ENCODE measurements at regions of chr10 and their contacts with region 1.

Region 1: GRCh38 chr10:126247446-126247975 is 140.8 kb downstream of the ADAM12 start:
- DNase-seq: peak; percentile 76
- H3K4me3 ChIP-seq: no peak overlapping the region
- H3K27ac ChIP-seq: no peak overlapping the region
- H3K4me1 ChIP-seq: peaks cover 10% of the 10 kb centered on the region
- H3K27me3 ChIP-seq: no peaks in the 10 kb centered on the region
- CTCF ChIP-seq: no peak

Region 2: DNA sequence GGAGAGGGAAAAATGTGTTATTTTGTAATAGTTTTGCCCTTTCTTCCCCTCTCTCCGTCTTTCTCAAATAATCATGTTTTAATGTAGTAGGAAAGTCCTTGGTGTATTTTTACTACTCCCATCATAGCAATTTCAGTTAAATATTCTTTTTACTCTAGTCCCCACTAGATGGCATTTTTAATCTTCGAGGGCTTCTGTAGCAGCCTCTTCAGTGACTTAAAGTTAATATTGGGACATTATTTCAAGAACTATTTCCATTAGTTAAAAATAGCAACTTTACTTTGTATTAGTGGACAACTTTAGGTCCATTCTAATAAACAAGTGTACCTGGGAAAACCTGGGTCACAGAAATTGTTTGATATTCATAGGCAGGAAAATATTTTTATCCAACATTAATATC is 505.0 kb before region 1 on chr10:
- CTCF ChIA-PET with region 1: no interaction called
- dilution Hi-C with region 1: no loop called
- in situ Hi-C with region 1: no loop called
- intact Hi-C with region 1: no loop called
- DNase-seq: no peak
- H3K4me3 ChIP-seq: no peak overlapping the region
- H3K27ac ChIP-seq: no peak overlapping the region
- H3K4me1 ChIP-seq: no peaks in the 10 kb centered on the region
- H3K27me3 ChIP-seq: no peaks in the 10 kb centered on the region
- CTCF ChIP-seq: no peak

Region 3: GRCh38 chr10:125812128-125812750 is 435.3 kb before region 1 on chr10:
- CTCF ChIA-PET with region 1: no interaction called
- dilution Hi-C with region 1: no loop called
- in situ Hi-C with region 1: no loop called
- intact Hi-C with region 1: no loop called
- DNase-seq: no peak
- H3K4me3 ChIP-seq: no peak overlapping the region
- H3K27ac ChIP-seq: no peak overlapping the region
- H3K4me1 ChIP-seq: no peaks in the 10 kb centered on the region
- H3K27me3 ChIP-seq: no peaks in the 10 kb centered on the region
- CTCF ChIP-seq: no peak

Region 4: DNA sequence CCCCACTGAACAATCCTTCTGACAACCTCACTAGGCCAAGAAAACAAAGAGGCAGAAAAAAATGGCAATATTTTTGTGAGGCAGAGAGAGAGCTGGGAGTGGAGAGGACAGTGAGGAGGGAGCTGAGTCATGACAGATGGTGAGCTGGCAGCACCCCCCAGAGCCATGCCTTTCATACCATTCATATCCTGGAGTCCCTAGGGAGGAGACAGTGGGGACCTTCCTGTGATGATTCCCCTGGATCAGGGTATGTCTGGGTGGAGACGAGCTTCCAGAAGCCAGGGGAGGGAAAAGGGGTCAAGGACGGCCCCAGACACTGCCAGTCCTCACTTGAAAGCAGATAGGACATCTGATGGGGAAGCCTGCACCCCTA is 19.8 kb before region 1 on chr10:
- CTCF ChIA-PET with region 1: no interaction called
- dilution Hi-C with region 1: no loop called
- in situ Hi-C with region 1: no loop called
- intact Hi-C with region 1: no loop called
- DNase-seq: peak; percentile 27
- H3K4me3 ChIP-seq: no peak overlapping the region
- H3K27ac ChIP-seq: no peak overlapping the region
- H3K4me1 ChIP-seq: no peaks in the 10 kb centered on the region
- H3K27me3 ChIP-seq: no peaks in the 10 kb centered on the region
- CTCF ChIP-seq: no peak

Region 5: GRCh38 chr10:126321440-126321839 is 73.9 kb after region 1 on chr10:
- CTCF ChIA-PET with region 1: no interaction called
- dilution Hi-C with region 1: loop called (anchors 5 kb)
- in situ Hi-C with region 1: no loop called
- intact Hi-C with region 1: no loop called
- DNase-seq: no peak
- H3K4me3 ChIP-seq: no peak overlapping the region
- H3K27ac ChIP-seq: no peak overlapping the region
- H3K4me1 ChIP-seq: no peaks in the 10 kb centered on the region
- H3K27me3 ChIP-seq: no peaks in the 10 kb centered on the region
- CTCF ChIP-seq: no peak

Region 6: GRCh38 chr10:126342702-126343101 is 95.2 kb after region 1 on chr10:
- CTCF ChIA-PET with region 1: no interaction called
- dilution Hi-C with region 1: no loop called
- in situ Hi-C with region 1: no loop called
- intact Hi-C with region 1: no loop called
- DNase-seq: no peak
- H3K4me3 ChIP-seq: no peak overlapping the region
- H3K27ac ChIP-seq: no peak overlapping the region
- H3K4me1 ChIP-seq: no peaks in the 10 kb centered on the region
- H3K27me3 ChIP-seq: peaks cover 2% of the 10 kb centered on the region
- CTCF ChIP-seq: no peak